Activated naive CD4-positive, alpha-beta T cell treated with anti-CD3 and anti-CD28 coated beads for 36 hours (primary cell): ENCODE measurements at regions of chr7 and their contacts with region 1.

Region 1: DNA sequence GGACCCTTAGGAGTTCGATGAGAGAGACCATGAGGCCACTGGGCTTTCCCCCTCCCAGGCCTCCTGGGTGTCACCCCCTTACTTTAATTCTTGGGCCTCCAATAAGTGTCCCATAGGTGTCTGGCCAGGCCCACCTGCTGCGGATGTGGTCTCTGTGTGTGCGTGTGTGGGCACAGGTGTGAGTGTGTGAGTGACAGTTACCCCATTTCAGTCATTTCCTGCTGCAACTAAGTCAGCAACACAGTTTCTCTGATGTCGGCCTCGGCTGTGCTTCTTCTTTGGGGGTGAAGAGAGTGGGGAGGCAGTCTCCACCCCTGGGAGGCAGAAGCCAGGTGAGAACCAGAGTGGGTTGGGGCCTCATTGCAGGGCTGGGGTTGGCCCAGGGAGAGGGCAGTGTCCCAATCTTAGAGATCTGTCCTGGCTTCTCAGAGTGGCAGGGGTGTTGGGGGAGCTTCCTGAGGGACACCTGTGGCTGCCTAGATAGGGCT is 1.5 kb downstream of the PVRIG start:
- DNase-seq: peak; percentile 93
- H3K4me3 Mint-ChIP-seq: peak overlapping the region; percentile 97
- H3K27ac Mint-ChIP-seq: peak overlapping the region; percentile 98
- H3K4me1 Mint-ChIP-seq: peaks cover 57% of the 10 kb centered on the region
- H3K27me3 Mint-ChIP-seq: no peaks in the 10 kb centered on the region

Region 2: GRCh38 chr7:100022665-100023064 is 198.6 kb before region 1 on chr7:
- CTCF ChIA-PET with region 1: no interaction called
- intact Hi-C with region 1: loop called (anchors 1 kb)
- DNase-seq: no peak
- H3K4me3 Mint-ChIP-seq: no peak overlapping the region
- H3K27ac Mint-ChIP-seq: peak overlapping the region; percentile 87
- H3K4me1 Mint-ChIP-seq: peaks cover 67% of the 10 kb centered on the region
- H3K27me3 Mint-ChIP-seq: no peaks in the 10 kb centered on the region

Region 3: GRCh38 chr7:100132697-100133151 is 88.6 kb before region 1 on chr7:
- CTCF ChIA-PET with region 1: interaction called, 41 read pairs
- intact Hi-C with region 1: loop called (anchors 1 kb)
- DNase-seq: peak; percentile 82
- H3K4me3 Mint-ChIP-seq: no peak overlapping the region
- H3K27ac Mint-ChIP-seq: no peak overlapping the region
- H3K4me1 Mint-ChIP-seq: peaks cover 21% of the 10 kb centered on the region
- H3K27me3 Mint-ChIP-seq: no peaks in the 10 kb centered on the region

Region 4: GRCh38 chr7:100158229-100159098 is 62.8 kb before region 1 on chr7 and contains the start of gene TRAPPC14:
- CTCF ChIA-PET with region 1: interaction called, 11 read pairs
- intact Hi-C with region 1: no loop called
- DNase-seq: peak; percentile 94
- H3K4me3 Mint-ChIP-seq: peak within 1 kb of the TSS; percentile 78
- H3K27ac Mint-ChIP-seq: peak within 1 kb of the TSS; percentile 83
- H3K4me1 Mint-ChIP-seq: peaks cover 37% of the 10 kb centered on the region
- H3K27me3 Mint-ChIP-seq: no peaks in the 10 kb centered on the region
- total RNA-seq, gene TRAPPC14: 21.2 to 21.6 TPM

Region 5: GRCh38 chr7:100190048-100190711 is 31.1 kb before region 1 on chr7:
- CTCF ChIA-PET with region 1: interaction called, 39 read pairs
- intact Hi-C with region 1: loop called (anchors 1 kb)
- DNase-seq: no peak
- H3K4me3 Mint-ChIP-seq: no peak overlapping the region
- H3K27ac Mint-ChIP-seq: peak overlapping the region; percentile 80
- H3K4me1 Mint-ChIP-seq: peaks cover 45% of the 10 kb centered on the region
- H3K27me3 Mint-ChIP-seq: no peaks in the 10 kb centered on the region

Region 6: DNA sequence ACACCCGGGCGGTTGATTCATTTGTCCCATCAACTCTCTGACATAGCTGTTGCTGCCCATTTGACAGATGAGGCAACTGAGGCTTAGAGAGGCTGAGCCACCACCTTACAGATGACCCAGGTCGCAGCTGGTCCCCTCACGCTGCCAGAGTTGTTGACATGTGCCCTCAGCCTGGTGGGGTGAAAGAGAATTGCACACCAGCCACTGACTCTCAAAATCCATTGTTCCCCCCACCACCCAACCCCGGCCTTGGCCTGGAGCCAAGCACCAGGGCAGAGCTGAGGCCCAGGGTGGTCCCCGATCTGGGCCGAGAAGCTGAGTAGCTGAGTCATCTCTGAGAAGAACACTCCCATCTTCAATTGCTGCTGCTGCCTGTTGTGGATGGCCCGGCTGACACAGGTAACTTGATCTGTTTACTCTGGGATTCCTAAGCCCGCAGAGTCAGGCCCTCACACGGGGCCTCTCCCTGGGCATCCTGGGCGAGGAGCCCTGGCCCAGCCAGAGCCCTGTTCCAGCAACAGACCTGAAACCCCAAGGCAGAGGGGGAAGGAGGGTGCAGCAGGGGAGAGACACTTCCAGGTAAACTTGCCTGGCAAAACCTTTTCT is 26.0 kb after region 1 on chr7:
- CTCF ChIA-PET with region 1: no interaction called
- intact Hi-C with region 1: loop called (anchors 1 kb)
- DNase-seq: no peak
- H3K4me3 Mint-ChIP-seq: no peak overlapping the region
- H3K27ac Mint-ChIP-seq: no peak overlapping the region
- H3K4me1 Mint-ChIP-seq: peaks cover 22% of the 10 kb centered on the region
- H3K27me3 Mint-ChIP-seq: no peaks in the 10 kb centered on the region

Region 7: GRCh38 chr7:100342765-100343164 is 121.5 kb after region 1 on chr7:
- CTCF ChIA-PET with region 1: interaction called, 3 read pairs
- intact Hi-C with region 1: loop called (anchors 1 kb)
- DNase-seq: no peak
- H3K4me3 Mint-ChIP-seq: no peak overlapping the region
- H3K27ac Mint-ChIP-seq: peak overlapping the region; percentile 81
- H3K4me1 Mint-ChIP-seq: peaks cover 46% of the 10 kb centered on the region
- H3K27me3 Mint-ChIP-seq: no peaks in the 10 kb centered on the region